ENCODE measurements at regions of chr5 and their contacts with region 1.

Region 1: GRCh38 chr5:159915904-159916840 is at the start of gene ADRA1B:
- DNase-seq: peak; percentile 82
- total RNA-seq, gene ADRA1B: 25.0 and 28.4 TPM in 2 replicates

Region 2: DNA sequence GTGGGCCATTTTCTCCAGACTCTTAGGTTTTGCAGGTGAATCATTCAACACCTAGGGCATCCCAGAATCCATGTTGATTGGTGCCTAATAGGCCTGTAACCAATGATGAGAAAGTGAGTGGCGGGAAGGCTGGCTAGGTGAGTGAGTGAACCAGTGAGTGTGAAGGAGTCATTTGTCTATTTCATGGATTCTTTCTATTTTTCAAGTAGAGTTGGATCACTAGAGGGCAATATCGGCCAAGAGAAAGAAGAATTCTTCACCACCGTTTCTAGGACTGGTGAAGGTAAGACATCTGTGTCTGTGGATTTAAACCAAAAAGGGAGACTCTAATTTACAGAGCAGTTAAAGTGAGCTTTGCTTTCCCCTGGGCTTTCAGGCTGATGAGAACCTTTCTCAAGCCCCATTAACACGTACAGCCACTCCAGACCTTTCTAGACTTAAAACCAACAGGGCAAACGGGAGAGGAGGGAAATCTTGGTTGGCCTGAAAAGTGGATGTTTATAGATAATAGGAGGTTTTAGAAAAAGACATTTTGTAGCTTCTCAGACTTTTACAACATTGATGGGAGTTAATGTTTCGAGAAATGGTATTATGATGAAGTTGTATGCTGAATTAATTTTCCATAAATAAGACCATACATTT is 471.6 kb before region 1 on chr5:
- in situ Hi-C with region 1: loop called (anchors 25 kb)
- DNase-seq: peak; percentile 89